Activated CD4-positive, alpha-beta T cell treated with anti-CD3 and anti-CD28 coated beads for 36 hours (primary cell): ENCODE measurements at regions of chr3 and their contacts with region 1.

Region 1: DNA sequence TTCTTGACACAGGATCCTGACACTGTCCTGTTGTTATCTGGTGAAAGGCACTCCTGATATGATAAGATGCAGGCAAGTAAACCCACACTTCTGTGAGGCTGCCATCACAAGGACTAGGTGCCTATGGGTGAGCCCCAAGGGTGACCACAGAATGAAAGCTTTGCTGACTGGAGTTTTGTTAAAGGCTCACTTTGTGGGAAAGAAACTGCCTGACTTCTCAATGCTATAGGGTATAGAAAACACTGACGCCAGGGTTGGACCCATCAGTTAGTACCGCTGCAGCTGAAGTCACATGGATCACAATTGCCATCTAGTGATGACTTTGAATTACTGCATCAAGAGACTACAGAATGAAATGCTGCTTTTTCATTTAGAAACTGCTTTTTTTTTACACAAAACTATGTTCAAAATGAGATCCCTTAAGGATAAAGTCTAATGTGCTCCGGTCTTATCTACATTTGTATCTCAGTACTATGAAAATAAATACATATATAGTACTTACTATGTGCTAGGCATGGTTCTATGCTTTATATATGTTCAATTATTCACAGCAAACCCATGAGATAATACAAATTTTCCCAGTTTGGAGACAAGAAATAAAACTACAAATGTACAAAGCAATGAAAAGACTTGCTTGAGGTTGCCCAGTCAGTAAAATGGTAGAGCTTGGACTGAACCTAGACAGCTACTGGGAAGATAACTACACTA is 64.2 kb upstream of the CMSS1 start:
- DNase-seq: peak; percentile 40
- ATAC-seq: peak; percentile 83
- H3K4me3 Mint-ChIP-seq: no peak overlapping the region
- H3K27ac Mint-ChIP-seq: no peak overlapping the region
- H3K4me1 Mint-ChIP-seq: no peaks in the 10 kb centered on the region
- H3K27me3 Mint-ChIP-seq: peaks cover 12% of the 10 kb centered on the region

Region 2: DNA sequence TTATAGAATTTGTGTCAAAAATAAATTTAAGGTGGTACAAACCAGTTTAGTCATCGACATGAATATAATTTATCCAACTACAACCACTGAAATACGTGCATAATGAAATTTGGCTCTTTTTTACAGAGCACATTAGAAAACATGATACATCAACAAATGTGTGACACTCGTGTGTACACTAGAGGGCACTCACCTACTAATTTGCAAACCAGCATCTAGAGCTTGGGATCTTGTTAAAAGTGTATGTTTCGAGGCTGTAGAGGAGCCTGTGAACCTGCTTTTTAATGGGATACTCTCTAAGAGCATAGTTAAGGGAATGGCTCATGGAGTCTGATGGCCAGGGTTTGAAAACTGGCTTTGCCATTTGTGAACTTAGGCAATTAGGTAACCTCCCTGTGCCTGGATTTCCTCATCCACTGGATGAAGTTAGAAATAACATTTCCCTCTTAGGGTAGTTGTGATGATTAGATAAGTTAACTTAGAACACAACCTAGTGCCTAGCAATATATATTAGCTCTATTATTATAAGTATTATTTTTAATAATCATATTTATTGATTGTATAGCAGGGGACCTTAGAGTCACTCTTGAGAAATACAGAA is 1151.2 kb before region 1 on chr3:
- CTCF ChIA-PET with region 1: no interaction called
- POLR2A ChIA-PET with region 1: no interaction called
- intact Hi-C with region 1: loop called in 1 of 2 experiments (anchors 5 kb)
- DNase-seq: peak; percentile 30
- ATAC-seq: peak; percentile 78
- H3K4me3 Mint-ChIP-seq: no peak overlapping the region
- H3K27ac Mint-ChIP-seq: no peak overlapping the region
- H3K4me1 Mint-ChIP-seq: peaks cover 4% of the 10 kb centered on the region
- H3K27me3 Mint-ChIP-seq: peaks cover 2% of the 10 kb centered on the region

Region 3: DNA sequence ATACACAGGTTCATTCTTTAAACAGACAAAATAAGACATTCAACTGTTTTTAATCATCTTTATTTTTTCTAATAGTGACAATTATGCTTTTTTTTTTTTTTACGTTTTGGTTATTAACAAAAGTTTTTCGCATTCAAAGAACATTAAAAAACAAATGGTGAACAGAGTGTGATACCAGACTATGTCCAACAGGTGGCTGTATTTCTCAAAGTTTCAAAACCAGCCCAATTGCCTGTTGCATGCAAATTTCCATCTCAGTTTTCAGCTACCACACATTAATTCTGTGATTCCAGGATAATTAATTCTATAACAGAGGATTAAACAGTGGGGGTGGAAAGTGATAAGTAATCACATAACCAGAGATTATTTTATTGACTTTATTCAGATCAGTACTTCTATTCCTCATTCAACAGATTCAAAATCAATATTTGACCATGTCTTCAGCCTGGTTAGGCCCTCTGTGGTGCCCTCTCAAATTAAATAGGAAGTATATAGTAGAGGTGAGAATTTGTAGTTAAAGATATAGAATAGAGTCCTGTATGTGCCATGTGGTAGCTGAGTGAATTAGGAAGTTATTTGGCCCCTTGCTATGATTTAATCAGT is 729.7 kb before region 1 on chr3:
- CTCF ChIA-PET with region 1: interaction called, 8 read pairs
- POLR2A ChIA-PET with region 1: no interaction called
- intact Hi-C with region 1: loop called (anchors 1 to 2 kb)
- DNase-seq: no peak
- ATAC-seq: no peak
- H3K4me3 Mint-ChIP-seq: no peak overlapping the region
- H3K27ac Mint-ChIP-seq: no peak overlapping the region
- H3K4me1 Mint-ChIP-seq: no peaks in the 10 kb centered on the region
- H3K27me3 Mint-ChIP-seq: peaks cover 8% of the 10 kb centered on the region

Region 4: GRCh38 chr3:99172736-99173657 is 580.4 kb before region 1 on chr3:
- CTCF ChIA-PET with region 1: no interaction called
- POLR2A ChIA-PET with region 1: no interaction called
- intact Hi-C with region 1: loop called in 1 of 2 experiments (anchors 10 kb)
- DNase-seq: peak; percentile 61
- ATAC-seq: peak; percentile 39
- H3K4me3 Mint-ChIP-seq: no peak overlapping the region
- H3K27ac Mint-ChIP-seq: no peak overlapping the region
- H3K4me1 Mint-ChIP-seq: no peaks in the 10 kb centered on the region
- H3K27me3 Mint-ChIP-seq: no peaks in the 10 kb centered on the region

Region 5: GRCh38 chr3:99366663-99367429 is 386.6 kb before region 1 on chr3:
- CTCF ChIA-PET with region 1: no interaction called
- POLR2A ChIA-PET with region 1: no interaction called
- intact Hi-C with region 1: no loop called
- DNase-seq: no peak
- ATAC-seq: no peak
- H3K4me3 Mint-ChIP-seq: no peak overlapping the region
- H3K27ac Mint-ChIP-seq: no peak overlapping the region
- H3K4me1 Mint-ChIP-seq: no peaks in the 10 kb centered on the region
- H3K27me3 Mint-ChIP-seq: no peaks in the 10 kb centered on the region

Region 6: GRCh38 chr3:99499235-99500158 is 253.9 kb before region 1 on chr3:
- CTCF ChIA-PET with region 1: interaction called, 3 read pairs
- POLR2A ChIA-PET with region 1: no interaction called
- intact Hi-C with region 1: loop called (anchors 1 to 5 kb)
- DNase-seq: peak; percentile 27
- ATAC-seq: no peak
- H3K4me3 Mint-ChIP-seq: no peak overlapping the region
- H3K27ac Mint-ChIP-seq: no peak overlapping the region
- H3K4me1 Mint-ChIP-seq: no peaks in the 10 kb centered on the region
- H3K27me3 Mint-ChIP-seq: no peaks in the 10 kb centered on the region

Region 7: DNA sequence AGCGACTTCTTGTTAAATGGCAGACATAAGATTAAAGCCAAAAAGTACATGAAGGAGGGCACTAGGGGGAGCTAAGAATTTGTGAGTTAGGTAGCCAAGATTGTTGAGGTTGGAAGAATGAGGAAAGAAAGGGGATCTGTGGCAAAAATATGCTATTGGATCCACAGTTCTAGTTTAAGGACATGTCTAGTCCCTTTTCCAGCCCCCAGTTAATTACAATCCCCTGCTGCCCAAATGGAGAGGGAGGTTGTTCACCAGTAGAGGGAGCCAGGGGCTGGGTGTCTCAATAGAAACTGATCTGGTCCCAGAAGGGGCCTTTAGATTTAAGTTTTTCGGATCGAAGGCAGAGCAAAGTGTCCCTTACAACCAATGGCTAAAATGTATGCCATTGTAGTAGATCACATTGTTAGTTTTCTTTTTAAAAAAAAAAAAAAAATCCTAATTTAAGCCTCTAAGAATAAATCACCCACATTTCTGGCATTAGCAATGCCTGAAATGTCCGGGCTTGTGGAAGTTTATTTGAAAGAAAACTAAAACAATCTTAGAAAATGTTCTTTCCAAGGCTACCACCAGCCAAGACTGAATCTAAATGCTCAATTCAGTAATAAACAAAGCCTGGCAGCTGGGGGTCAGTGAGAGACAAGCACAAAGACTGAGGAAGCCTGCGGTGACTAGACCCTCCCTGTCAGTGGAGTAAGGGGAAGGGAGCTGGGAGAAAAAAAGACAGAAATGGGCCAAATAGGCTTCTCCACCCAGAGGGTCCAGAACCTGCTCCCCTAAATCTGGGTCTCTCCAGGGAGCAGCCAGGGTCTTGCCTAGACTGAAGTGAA is 107.9 kb before region 1 on chr3:
- CTCF ChIA-PET with region 1: interaction called, 4 read pairs
- POLR2A ChIA-PET with region 1: no interaction called
- intact Hi-C with region 1: loop called (anchors 1 to 2 kb)
- DNase-seq: no peak
- ATAC-seq: no peak
- H3K4me3 Mint-ChIP-seq: no peak overlapping the region
- H3K27ac Mint-ChIP-seq: no peak overlapping the region
- H3K4me1 Mint-ChIP-seq: no peaks in the 10 kb centered on the region
- H3K27me3 Mint-ChIP-seq: peaks cover 32% of the 10 kb centered on the region

Region 8: GRCh38 chr3:99765042-99765942 is 11.9 kb after region 1 on chr3:
- CTCF ChIA-PET with region 1: interaction called, 18 read pairs
- POLR2A ChIA-PET with region 1: no interaction called
- intact Hi-C with region 1: no loop called
- DNase-seq: no peak
- ATAC-seq: no peak
- H3K4me3 Mint-ChIP-seq: no peak overlapping the region
- H3K27ac Mint-ChIP-seq: no peak overlapping the region
- H3K4me1 Mint-ChIP-seq: no peaks in the 10 kb centered on the region
- H3K27me3 Mint-ChIP-seq: peaks cover 3% of the 10 kb centered on the region